ENCODE measurements at regions of chr4 and their contacts with region 1.

Region 1: GRCh38 chr4:112765317-112765975 is 128.5 kb downstream of the LARP7 start:
- DNase-seq: peak; percentile 65
- H3K4me3 ChIP-seq: no peak overlapping the region
- H3K27ac ChIP-seq: no peak overlapping the region
- H3K4me1 ChIP-seq: no peaks in the 10 kb centered on the region
- CTCF ChIP-seq: peak; percentile 83

Region 2: DNA sequence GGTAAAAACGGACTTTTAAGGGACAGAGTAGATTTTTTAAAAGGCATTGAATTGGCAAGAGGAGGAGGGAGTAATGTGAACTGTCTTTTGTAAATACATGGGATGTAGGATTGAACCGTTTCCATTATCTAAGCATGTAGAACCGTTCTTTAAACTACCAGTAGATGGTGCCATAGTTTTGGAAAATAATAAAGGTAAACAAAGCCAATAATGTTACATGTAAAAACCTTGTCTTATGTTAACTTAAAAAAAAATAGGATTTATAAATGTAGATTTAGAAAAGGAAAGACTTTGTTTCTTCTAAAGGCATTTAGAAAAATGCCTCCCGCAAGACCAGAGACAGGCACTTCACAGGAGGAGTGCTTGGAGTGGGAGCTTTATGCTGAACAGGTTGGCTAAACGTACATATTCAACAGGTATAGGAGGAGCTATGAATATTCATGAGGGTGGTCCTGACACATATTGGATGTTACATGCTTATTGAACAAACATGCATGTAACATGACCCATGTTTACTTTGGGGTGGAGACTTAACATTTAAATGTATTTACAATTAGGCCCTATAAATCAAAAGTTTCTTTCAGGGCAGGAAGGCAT is 665.6 kb before region 1 on chr4:
- CTCF ChIA-PET with region 1: no interaction called
- POLR2A ChIA-PET with region 1: no interaction called
- intact Hi-C with region 1: loop called (anchors 2 kb)
- DNase-seq: peak; percentile 63
- H3K4me3 ChIP-seq: no peak overlapping the region
- H3K27ac ChIP-seq: no peak overlapping the region
- H3K4me1 ChIP-seq: no peaks in the 10 kb centered on the region
- CTCF ChIP-seq: peak; percentile 97

Region 3: GRCh38 chr4:112257098-112257497 is 508.3 kb before region 1 on chr4:
- CTCF ChIA-PET with region 1: no interaction called
- POLR2A ChIA-PET with region 1: no interaction called
- intact Hi-C with region 1: loop called (anchors 5 kb)
- DNase-seq: no peak
- H3K4me3 ChIP-seq: no peak overlapping the region
- H3K27ac ChIP-seq: no peak overlapping the region
- H3K4me1 ChIP-seq: peaks cover 4% of the 10 kb centered on the region
- CTCF ChIP-seq: no peak

Region 4: DNA sequence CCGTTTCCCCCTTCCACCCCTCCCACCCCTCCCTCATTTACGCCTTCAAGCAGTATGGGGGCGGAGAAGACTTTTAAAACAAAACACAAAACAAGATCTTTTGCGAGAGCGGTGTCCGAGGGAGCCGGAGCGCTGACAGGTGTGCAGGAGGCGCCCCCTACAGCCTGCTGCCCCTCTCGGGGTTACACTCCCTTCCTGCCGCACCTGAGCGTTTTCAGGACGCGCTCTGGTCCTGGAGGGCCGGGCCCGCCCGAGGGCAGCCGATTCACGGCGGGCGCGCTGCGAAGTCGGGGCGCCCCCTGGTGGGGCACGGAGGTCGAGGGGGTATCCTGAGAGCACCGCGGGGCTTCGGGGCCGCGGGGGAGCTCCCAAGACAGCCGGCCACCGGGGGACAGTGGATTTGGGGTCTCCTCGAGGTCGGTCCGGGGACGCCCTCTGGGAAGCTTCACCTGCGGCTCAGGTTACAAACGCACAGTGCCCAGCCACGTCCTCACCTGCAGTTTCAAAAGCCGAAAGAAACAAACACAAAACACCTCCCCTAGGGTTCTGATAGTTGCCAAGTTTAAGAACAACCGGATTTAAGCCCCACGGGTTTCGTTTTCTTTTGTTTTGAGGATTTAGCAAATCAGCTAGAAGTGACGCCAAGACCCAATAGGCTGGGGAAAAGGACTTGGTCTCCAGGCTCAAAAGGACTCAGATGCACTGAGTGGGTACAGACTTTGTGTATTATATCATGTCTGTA is 241.5 kb before region 1 on chr4:
- CTCF ChIA-PET with region 1: no interaction called
- POLR2A ChIA-PET with region 1: interaction called, 4 read pairs
- intact Hi-C with region 1: loop called (anchors 2 kb)
- DNase-seq: peak; percentile 93
- H3K4me3 ChIP-seq: peak overlapping the region; percentile 69
- H3K27ac ChIP-seq: no peak overlapping the region
- H3K4me1 ChIP-seq: peaks cover 20% of the 10 kb centered on the region
- CTCF ChIP-seq: peak; percentile 99

Region 5: GRCh38 chr4:112938461-112939058 is 173.1 kb after region 1 on chr4:
- CTCF ChIA-PET with region 1: no interaction called
- POLR2A ChIA-PET with region 1: no interaction called
- intact Hi-C with region 1: loop called (anchors 2 kb)
- DNase-seq: peak; percentile 33
- H3K4me3 ChIP-seq: no peak overlapping the region
- H3K27ac ChIP-seq: no peak overlapping the region
- H3K4me1 ChIP-seq: no peaks in the 10 kb centered on the region
- CTCF ChIP-seq: peak; percentile 94

Region 6: DNA sequence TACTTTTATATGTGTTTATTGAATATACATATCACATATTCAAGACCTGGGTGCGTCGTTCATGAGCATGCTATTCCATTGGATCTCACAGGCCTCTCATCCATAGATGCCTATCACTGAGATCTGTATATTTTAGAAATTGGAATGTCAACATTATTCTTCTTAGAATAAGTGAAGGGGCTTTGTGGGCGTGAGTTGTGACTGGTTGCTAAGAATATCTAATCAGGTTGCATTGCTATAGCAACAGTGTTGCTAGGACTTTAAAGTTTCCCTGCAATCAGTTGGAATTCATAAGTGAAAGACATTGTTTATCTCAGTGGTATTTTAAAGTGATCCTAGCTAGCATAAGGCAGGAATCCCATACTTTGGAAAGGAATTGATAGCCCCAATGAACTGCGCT is 247.3 kb after region 1 on chr4:
- CTCF ChIA-PET with region 1: no interaction called
- POLR2A ChIA-PET with region 1: no interaction called
- intact Hi-C with region 1: no loop called
- DNase-seq: no peak
- H3K4me3 ChIP-seq: no peak overlapping the region
- H3K27ac ChIP-seq: no peak overlapping the region
- H3K4me1 ChIP-seq: no peaks in the 10 kb centered on the region
- CTCF ChIP-seq: no peak

Region 7: DNA sequence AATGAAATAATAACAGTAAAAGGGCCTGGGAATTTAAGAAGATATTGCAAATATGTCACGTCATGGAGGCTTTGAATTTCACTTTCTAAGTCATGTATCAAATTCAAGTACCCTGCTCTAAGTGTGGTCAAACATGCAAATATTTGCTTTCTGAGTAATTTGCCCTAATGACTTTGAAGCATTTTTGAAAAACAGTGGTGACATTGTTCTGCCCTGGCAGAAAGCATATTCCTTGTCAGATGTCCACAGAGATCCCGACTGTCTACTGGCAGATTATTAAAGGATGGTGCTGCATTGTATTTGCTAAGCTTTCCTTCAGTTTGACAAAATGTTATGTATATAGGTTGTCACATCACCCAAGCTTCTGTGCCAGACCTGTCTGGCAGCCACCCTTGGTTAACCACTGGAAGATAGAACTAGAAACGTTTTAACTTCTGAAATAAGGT is 376.5 kb after region 1 on chr4:
- CTCF ChIA-PET with region 1: no interaction called
- POLR2A ChIA-PET with region 1: no interaction called
- intact Hi-C with region 1: no loop called
- DNase-seq: no peak
- H3K4me3 ChIP-seq: no peak overlapping the region
- H3K27ac ChIP-seq: no peak overlapping the region
- H3K4me1 ChIP-seq: no peaks in the 10 kb centered on the region
- CTCF ChIP-seq: no peak

Measured in OCI-LY7 (cell line).